ENCODE measurements at regions of chr16 and their contacts with region 1.

Region 1: DNA sequence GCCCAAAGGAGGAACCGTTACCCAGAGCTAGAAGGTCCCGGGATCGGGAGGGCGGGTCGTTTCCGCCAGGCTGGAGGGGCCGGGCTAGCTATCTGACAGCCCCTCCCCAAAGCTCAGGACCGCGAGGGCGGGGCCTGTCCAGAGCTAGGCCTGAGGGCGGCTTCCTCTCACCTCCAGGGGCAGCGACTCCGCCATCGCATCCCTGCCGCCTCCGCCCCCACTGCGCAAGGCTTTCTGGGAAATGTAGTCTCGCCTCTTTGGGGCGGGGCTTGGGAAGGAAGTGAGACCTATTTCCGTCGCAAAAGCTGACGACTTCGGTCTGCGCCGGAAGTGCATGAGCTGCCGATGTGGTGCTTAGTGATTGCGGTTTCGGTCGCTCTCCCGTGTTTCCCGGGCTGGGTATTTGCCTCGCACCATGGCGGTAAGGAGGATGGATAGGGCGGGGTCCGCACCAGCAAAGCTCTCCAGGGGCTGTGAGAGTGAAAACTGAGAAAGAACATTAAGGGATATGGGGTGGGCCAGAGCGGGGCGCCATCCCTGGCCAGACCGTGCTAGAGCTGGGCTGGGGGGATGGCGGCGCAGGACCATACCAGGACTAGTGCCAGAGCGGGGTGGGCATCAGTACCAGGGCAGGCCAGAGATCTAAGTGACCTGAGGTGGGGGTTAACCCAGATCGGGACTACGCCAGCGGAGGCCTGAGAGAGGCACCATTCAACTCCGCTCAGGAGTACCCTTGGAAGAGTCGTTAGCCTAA is at the start of gene TMEM208:
- DNase-seq: peak; percentile 99
- H3K4me3 Mint-ChIP-seq: peak within 1 kb of the TSS; percentile 100
- H3K27ac Mint-ChIP-seq: peak within 1 kb of the TSS; percentile 96
- H3K4me1 Mint-ChIP-seq: peaks cover 51% of the 10 kb centered on the region
- H3K27me3 Mint-ChIP-seq: no peaks in the 10 kb centered on the region
- total RNA-seq, gene TMEM208: 24.6 to 29.4 TPM

Region 2: DNA sequence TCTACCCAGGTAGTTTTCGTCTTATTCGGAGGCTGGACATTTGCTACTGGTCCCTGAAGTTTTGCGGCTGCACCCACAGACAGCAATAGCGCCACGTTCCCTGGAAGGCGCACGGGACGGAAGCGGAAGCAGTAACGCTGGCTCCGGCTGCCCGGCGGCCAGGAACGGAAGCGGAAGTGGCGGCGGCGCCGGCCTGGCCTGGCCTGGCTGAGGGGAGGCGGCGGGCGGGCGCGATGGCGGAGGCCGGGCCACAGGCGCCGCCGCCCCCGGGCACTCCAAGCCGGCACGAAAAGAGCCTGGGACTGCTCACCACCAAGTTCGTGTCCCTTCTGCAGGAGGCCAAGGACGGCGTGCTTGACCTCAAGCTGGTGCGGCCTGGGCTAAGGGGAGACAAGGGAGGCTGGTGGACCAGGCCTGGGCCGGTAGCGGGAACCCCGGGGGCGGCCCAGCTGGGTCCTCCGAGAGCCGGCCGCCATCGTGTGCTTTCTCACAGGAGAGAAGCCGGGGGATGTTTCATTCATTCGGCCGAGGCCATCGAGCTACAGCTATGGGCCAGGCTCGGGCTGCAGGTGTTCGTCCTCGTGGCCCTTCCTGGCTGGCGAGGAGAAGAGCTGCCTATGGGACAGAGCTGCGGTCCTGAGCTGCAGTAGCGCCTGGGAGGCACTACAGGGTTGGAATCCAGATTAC is 34.8 kb before region 1 on chr16 and contains the start of gene E2F4:
- CTCF ChIA-PET with region 1: no interaction called
- intact Hi-C with region 1: loop called (anchors 1 kb)
- DNase-seq: peak; percentile 91
- H3K4me3 Mint-ChIP-seq: peak within 1 kb of the TSS; percentile 86
- H3K27ac Mint-ChIP-seq: peak within 1 kb of the TSS; percentile 80
- H3K4me1 Mint-ChIP-seq: peaks cover 43% of the 10 kb centered on the region
- H3K27me3 Mint-ChIP-seq: no peaks in the 10 kb centered on the region
- total RNA-seq, gene E2F4: 65.1 to 66.5 TPM

Region 3: DNA sequence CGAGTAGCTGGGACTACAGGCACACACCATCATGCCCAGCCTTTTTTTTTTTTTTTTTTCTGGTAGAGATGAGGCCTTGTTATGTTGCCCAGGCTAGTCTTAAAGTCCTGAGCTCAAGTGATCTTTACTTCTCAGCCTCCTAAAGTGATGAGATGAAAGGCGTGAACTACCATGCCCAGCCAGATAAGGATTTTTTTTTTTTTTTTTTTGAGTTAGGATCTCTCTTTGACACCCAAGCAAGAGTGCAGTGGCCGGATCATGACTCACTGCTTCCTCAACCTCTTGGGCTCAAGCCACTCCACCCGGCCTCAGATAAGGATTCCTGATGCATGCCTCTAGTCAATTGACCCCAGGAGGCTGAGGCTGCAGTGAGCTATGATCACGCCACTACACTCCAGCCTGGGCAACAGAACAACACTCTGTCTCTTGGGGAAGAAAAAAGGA is 41.2 kb after region 1 on chr16:
- CTCF ChIA-PET with region 1: no interaction called
- intact Hi-C with region 1: no loop called
- DNase-seq: no peak
- H3K4me3 Mint-ChIP-seq: no peak overlapping the region
- H3K27ac Mint-ChIP-seq: no peak overlapping the region
- H3K4me1 Mint-ChIP-seq: no peaks in the 10 kb centered on the region
- H3K27me3 Mint-ChIP-seq: peaks cover 5% of the 10 kb centered on the region

Region 4: DNA sequence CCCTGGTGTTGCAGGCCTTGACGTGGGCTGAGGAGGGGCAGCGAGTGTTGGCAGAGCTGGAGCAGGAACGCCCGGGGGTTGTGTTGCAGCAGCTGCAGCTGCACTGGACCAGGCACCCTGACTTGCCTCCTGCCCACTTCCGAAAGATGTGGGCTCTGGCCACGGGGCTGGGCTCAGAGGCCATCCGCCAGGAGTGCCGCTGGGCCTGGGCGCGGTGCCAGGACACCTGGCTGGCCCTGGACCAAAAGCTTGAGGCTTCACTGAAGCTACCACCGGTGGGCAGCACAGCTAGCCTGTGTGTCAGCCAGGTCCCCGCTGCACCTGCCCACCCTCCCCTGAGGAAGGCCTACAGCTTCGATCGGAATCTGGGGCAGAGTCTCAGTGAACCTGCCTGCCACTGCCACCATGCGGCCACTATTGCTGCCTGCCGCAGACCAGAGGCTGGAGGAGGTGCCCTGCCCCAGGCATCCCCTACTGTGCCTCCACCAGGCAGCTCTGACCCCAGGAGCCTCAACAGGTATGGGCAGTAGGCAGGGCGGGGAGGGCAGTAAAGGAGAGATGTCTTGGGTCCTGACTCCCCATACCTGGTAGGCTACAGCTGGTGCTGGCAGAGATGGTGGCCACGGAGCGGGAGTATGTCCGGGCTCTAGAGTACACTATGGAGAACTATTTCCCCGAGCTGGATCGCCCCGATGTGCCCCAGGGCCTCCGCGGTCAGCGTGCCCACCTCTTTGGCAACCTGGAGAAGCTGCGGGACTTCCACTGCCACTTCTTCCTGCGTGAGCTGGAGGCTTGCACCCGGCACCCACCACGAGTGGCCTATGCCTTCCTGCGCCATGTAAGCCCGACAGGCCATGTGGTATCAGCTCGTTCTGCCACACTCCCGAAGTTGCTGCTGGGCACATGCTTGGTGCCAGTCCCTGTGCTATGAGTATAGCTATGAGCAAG is 58.0 kb after region 1 on chr16:
- CTCF ChIA-PET with region 1: no interaction called
- intact Hi-C with region 1: no loop called
- DNase-seq: no peak
- H3K4me3 Mint-ChIP-seq: no peak overlapping the region
- H3K27ac Mint-ChIP-seq: no peak overlapping the region
- H3K4me1 Mint-ChIP-seq: no peaks in the 10 kb centered on the region
- H3K27me3 Mint-ChIP-seq: no peaks in the 10 kb centered on the region

Measured in activated naive CD4-positive, alpha-beta T cell treated with anti-CD3 and anti-CD28 coated beads for 36 hours (primary cell).